IMR-90 (cell line): ENCODE measurements at regions of chr4 and their contacts with region 1.

Region 1: DNA sequence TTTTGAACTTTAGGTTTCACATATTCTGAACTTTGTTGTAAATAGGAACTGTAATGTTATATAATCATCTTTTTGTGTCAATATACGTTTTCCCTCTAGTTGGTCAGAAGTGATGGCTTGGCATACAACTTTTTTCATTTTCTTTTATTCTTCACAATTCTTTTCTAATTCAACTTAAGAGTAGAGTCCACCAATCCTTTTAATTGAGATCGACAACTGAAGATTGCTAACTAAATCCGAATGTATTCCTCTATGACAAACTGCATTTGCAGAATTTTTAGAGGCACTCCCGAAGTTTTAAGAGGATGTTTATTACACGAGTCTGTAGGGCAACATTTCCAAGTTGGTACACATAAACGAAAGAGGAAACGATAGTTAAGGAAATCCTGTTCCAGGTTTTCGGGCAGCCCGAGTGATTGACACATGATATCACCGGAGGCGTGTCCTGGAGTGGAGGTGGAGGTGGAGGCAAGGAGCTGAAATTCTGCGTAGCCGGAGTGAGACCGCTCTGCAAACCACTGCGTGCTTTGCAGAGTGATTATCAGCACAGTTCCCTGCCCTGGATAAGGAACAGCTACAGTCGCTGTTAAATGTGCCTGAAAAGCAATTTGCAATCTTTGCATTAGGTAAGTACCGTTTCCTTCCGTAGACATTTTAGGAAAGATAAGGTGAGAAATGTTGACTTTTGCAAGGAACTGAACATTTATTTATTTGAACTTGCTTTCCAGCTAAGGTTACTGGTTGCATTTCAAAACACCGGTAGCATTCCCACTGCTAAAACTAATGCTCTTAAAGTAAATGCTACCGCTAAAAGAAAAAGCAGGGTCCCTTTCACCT is at the start of gene SPRY1:
- DNase-seq: peak; percentile 88
- ATAC-seq: peak; percentile 45
- H3K4me3 ChIP-seq: peak within 1 kb of the TSS; percentile 60
- H3K27ac ChIP-seq: peak within 1 kb of the TSS; percentile 95
- H3K4me1 ChIP-seq: no peaks in the 10 kb centered on the region
- H3K27me3 ChIP-seq: no peaks in the 10 kb centered on the region
- CTCF ChIP-seq: no peak
- POLR2A ChIP-seq: no peak
- RAD21 ChIP-seq: no peak; the same call in 1 of the 2 replicates
- total RNA-seq, gene SPRY1: 1.4 and 1.9 TPM in 2 replicates

Region 2: GRCh38 chr4:123102897-123103471 is 293.5 kb before region 1 on chr4:
- CTCF ChIA-PET with region 1: no interaction called
- POLR2A ChIA-PET with region 1: no interaction called
- dilution Hi-C with region 1: no loop called
- in situ Hi-C with region 1: no loop called
- intact Hi-C with region 1: loop called (anchors 2 kb)
- DNase-seq: peak; percentile 69
- ATAC-seq: peak; percentile 89
- H3K4me3 ChIP-seq: no peak overlapping the region
- H3K27ac ChIP-seq: no peak overlapping the region
- H3K4me1 ChIP-seq: no peaks in the 10 kb centered on the region
- H3K27me3 ChIP-seq: no peaks in the 10 kb centered on the region
- CTCF ChIP-seq: peak; percentile 71
- POLR2A ChIP-seq: no peak
- RAD21 ChIP-seq: peak; percentile 81

Region 3: DNA sequence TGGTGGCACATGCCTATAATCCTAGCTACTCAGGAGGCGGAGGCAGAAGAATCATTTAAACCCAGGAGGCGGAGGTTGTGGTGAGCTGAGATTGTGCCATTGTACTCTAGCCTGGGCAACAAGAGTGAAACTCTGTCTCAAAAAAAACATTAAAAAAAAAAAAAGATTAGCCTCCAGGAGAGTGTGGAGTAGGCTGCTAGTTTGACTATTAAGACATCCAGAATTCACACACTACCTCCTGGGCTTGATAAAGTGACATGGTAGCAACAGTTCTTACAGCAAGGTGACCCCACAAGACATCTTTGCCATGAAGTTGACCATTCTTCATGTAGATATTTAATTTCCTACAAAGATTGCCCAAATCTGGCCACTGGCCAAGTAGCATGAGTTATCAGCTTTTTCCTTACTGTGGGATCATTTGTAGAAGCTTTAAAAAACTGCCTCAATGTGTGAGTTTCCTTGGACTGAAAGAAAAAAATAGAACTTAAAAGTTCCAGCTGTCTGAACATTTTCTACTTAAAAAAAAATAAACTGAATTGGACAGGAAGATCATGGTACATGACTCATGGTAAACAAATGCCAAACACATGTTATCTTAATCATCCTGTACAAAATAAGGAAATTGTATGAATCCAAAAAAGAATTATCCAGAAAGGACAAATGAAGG is 35.2 kb before region 1 on chr4:
- CTCF ChIA-PET with region 1: no interaction called
- POLR2A ChIA-PET with region 1: no interaction called
- dilution Hi-C with region 1: no loop called
- in situ Hi-C with region 1: no loop called
- intact Hi-C with region 1: no loop called
- DNase-seq: peak; percentile 94
- ATAC-seq: peak; percentile 79
- H3K4me3 ChIP-seq: no peak overlapping the region
- H3K27ac ChIP-seq: peak overlapping the region; percentile 86
- H3K4me1 ChIP-seq: peaks cover 5% of the 10 kb centered on the region
- H3K27me3 ChIP-seq: no peaks in the 10 kb centered on the region
- CTCF ChIP-seq: no peak
- POLR2A ChIP-seq: no peak
- RAD21 ChIP-seq: no peak

Region 4: DNA sequence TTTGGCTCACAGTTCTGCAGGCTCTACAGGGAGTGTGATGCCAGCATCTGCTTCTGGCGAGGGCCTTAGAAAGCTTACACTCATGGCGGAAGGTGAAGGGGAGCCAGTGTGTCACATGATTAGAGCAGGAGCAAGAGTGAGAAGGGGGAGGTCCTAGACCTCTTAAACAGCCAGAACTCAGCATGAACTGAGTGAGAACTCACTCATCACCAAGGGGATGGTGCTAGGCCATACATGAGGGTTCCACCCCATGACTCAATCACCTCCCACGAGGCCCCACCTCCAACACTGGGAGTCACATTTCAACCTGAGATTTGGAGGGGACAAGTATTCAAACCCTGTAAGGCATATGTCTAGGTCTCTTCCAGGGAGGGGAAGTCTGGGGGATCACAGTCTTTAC is 33.5 kb after region 1 on chr4:
- CTCF ChIA-PET with region 1: no interaction called
- POLR2A ChIA-PET with region 1: no interaction called
- dilution Hi-C with region 1: no loop called
- in situ Hi-C with region 1: no loop called
- intact Hi-C with region 1: no loop called
- DNase-seq: no peak
- ATAC-seq: no peak
- H3K4me3 ChIP-seq: no peak overlapping the region
- H3K27ac ChIP-seq: no peak overlapping the region
- H3K4me1 ChIP-seq: no peaks in the 10 kb centered on the region
- H3K27me3 ChIP-seq: no peaks in the 10 kb centered on the region
- CTCF ChIP-seq: no peak
- POLR2A ChIP-seq: no peak
- RAD21 ChIP-seq: no peak

Region 5: DNA sequence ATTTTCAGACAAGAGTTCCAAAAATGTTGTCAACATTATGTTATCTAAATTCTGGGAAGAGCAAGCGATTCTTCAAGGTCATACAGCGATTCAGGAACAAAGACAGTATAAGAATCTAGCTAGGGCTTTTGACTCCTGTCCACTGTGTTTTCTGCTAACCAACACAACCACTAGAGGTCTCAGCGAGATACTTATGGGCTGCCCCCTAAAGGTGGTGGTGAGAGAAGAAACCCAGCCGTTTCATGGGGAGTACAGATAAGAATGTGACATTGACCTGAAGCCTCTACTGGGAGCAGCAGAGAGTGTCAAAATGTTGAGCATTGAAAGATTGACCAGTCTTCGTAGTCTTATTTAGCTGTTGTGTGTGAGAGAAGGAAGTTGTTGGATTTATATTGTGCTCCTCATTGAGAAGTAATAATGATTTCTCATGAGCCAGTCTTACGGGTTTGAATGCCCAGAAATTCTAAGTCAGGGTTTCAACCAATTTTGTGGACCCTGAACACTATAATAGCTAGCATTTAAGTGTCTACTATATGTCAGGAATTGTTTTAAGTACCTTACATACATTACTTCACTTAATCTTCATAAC is 168.3 kb after region 1 on chr4:
- CTCF ChIA-PET with region 1: no interaction called
- POLR2A ChIA-PET with region 1: no interaction called
- dilution Hi-C with region 1: no loop called
- in situ Hi-C with region 1: no loop called
- intact Hi-C with region 1: loop called (anchors 2 kb)
- DNase-seq: peak; percentile 69
- ATAC-seq: peak; percentile 77; the same call in 1 of the 2 replicates
- H3K4me3 ChIP-seq: no peak overlapping the region
- H3K27ac ChIP-seq: no peak overlapping the region
- H3K4me1 ChIP-seq: peaks cover 10% of the 10 kb centered on the region
- H3K27me3 ChIP-seq: no peaks in the 10 kb centered on the region
- CTCF ChIP-seq: peak; percentile 95
- POLR2A ChIP-seq: no peak
- RAD21 ChIP-seq: peak; percentile 68

Region 6: GRCh38 chr4:123785538-123785937 is 389.0 kb after region 1 on chr4:
- CTCF ChIA-PET with region 1: no interaction called
- POLR2A ChIA-PET with region 1: no interaction called
- dilution Hi-C with region 1: no loop called
- in situ Hi-C with region 1: no loop called
- intact Hi-C with region 1: loop called (anchors 5 kb)
- DNase-seq: peak; percentile 96
- ATAC-seq: peak; percentile 16
- H3K4me3 ChIP-seq: no peak overlapping the region
- H3K27ac ChIP-seq: peak overlapping the region; percentile 49; the same call in 1 of the 2 replicates
- H3K4me1 ChIP-seq: peaks cover 21% of the 10 kb centered on the region
- H3K27me3 ChIP-seq: no peaks in the 10 kb centered on the region
- CTCF ChIP-seq: no peak
- POLR2A ChIP-seq: no peak
- RAD21 ChIP-seq: no peak

Region 7: DNA sequence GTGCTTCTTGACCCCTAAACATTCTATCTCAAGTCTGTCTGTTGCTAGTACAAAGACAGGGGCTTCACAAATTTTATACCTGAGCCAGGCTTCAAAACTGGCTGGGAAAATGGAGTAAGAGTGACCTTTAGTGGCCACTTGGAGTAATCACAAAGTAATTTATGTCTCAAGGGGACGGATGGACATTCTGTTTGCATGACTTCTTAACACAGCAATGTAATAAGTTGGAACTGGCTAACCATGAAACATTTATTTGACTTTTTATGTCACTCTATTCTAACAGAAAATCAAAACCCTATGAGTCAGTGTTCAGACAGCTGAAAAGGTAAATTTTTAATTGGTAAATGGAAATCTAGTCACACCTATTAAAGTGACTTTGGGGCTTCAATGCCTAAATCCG is 715.4 kb after region 1 on chr4:
- CTCF ChIA-PET with region 1: no interaction called
- POLR2A ChIA-PET with region 1: no interaction called
- dilution Hi-C with region 1: no loop called
- in situ Hi-C with region 1: no loop called
- intact Hi-C with region 1: loop called (anchors 1 kb)
- DNase-seq: peak; percentile 87
- ATAC-seq: peak; percentile 88
- H3K4me3 ChIP-seq: no peak overlapping the region
- H3K27ac ChIP-seq: no peak overlapping the region
- H3K4me1 ChIP-seq: no peaks in the 10 kb centered on the region; the same call in 1 of the 2 replicates
- H3K27me3 ChIP-seq: no peaks in the 10 kb centered on the region
- CTCF ChIP-seq: peak; percentile 82
- POLR2A ChIP-seq: no peak
- RAD21 ChIP-seq: peak; percentile 92

Region 8: DNA sequence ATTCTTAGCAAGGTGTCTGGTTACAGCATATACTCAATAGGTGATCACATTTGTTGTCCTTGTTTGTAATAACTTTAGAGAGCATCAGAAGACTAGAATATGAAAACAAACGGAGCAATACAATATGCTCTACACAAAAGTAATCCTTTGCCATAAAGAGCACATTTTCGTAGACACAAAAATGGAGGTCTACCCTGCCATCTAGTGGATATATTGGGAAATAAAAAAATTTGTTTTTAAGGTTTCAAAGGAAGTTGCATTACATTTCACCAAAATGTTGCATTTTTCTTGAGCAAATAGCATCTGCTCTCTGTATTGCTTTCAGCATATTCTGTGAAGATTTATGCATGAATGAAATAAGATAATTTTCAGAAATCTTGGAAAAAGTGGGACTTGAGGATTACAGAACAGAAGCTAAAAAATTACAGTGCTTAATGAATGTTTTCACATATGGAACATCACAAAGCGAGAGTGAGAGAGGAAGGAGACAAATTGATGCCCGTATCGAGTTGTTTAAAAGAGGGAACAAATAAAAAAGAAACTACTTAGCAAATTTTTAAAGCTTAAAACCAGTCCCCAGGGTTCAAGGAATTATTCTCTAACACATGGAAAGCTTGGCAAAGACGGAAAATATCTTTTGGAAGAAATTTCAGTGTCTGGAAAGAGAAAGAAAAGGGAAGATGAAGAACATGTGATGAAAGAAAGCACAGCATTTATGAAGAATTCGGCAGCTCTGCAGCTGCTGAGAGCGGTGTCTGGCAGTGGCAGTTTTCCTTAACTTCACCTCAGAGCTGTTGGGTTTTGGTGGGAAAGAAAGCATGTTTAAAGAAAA is 925.9 kb after region 1 on chr4:
- CTCF ChIA-PET with region 1: no interaction called
- POLR2A ChIA-PET with region 1: no interaction called
- dilution Hi-C with region 1: no loop called
- in situ Hi-C with region 1: no loop called
- intact Hi-C with region 1: loop called (anchors 1 kb)
- DNase-seq: peak; percentile 49
- ATAC-seq: peak; percentile 71
- H3K4me3 ChIP-seq: no peak overlapping the region
- H3K27ac ChIP-seq: no peak overlapping the region
- H3K4me1 ChIP-seq: no peaks in the 10 kb centered on the region
- H3K27me3 ChIP-seq: no peaks in the 10 kb centered on the region
- CTCF ChIP-seq: peak; percentile 61
- POLR2A ChIP-seq: no peak
- RAD21 ChIP-seq: peak; percentile 63